ENCODE measurements at regions of chr7 and their contacts with region 1.

Region 1: DNA sequence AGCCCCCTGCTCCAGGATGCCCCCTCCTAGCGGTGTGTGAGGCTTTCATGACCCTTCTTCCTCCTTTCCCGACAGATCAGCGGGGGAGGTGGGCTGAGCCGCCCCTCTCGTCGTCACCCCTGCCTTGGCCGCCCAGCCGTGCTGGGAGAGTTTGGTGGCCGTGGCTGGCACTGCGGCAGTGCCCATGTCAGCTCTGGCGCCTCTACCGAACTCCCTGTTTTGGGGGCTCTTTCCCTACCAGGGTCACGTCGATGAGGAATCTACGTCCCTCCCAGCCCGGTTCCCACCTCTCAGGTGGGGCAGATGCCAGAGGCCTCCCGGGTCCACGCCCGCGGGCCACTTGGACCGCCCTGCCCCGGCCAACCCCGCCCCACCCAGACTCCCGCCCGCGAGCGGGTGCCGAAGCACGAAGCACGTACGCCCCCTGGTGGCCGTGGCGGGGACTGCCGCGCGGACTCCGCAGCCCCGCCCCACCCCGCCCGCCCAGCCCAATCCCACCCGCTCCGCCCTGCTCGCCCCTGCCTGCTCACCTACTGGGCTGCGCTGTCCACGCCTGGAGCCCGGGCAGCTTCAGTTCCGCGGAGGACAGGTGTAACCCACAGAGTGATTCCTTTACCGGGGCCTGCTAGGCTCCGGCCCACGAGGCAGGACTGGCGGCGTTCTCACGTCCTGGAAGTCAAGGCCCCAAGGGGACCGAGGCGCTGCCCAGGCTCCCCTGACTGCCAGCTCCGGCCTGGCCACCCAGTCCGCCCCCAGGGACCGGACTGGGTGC is 127.1 kb downstream of the UBE2H start:
- DNase-seq: peak; percentile 88
- ATAC-seq: peak; percentile 92
- H3K4me3 ChIP-seq: peak overlapping the region; percentile 50 to 83 (median 64)
- H3K4me3 Mint-ChIP-seq: peak overlapping the region; percentile 96
- H3K27ac ChIP-seq: no peak overlapping the region
- H3K27ac Mint-ChIP-seq: peak overlapping the region; percentile 55
- H3K4me1 ChIP-seq: peaks cover 16 to 26% of the 10 kb centered on the region in 2 donors
- H3K4me1 Mint-ChIP-seq: peaks cover 18% of the 10 kb centered on the region
- H3K27me3 ChIP-seq: no peaks in the 10 kb centered on the region
- H3K27me3 Mint-ChIP-seq: no peaks in the 10 kb centered on the region
- CTCF ChIP-seq: peak; percentile 95

Region 2: GRCh38 chr7:129343099-129343700 is 482.5 kb before region 1 on chr7:
- CTCF ChIA-PET with region 1: interaction called, 18 read pairs
- POLR2A ChIA-PET with region 1: no interaction called
- intact Hi-C with region 1: loop called (anchors 1 kb)
- DNase-seq: peak; percentile 58
- ATAC-seq: no peak
- H3K4me3 ChIP-seq: no peak overlapping the region
- H3K4me3 Mint-ChIP-seq: no peak overlapping the region
- H3K27ac ChIP-seq: no peak overlapping the region
- H3K27ac Mint-ChIP-seq: no peak overlapping the region
- H3K4me1 ChIP-seq: no peaks in the 10 kb centered on the region
- H3K4me1 Mint-ChIP-seq: peaks cover 4% of the 10 kb centered on the region
- H3K27me3 ChIP-seq: no peaks in the 10 kb centered on the region
- H3K27me3 Mint-ChIP-seq: no peaks in the 10 kb centered on the region
- CTCF ChIP-seq: peak; percentile 90

Region 3: GRCh38 chr7:129433847-129434674 is 391.6 kb before region 1 on chr7 and contains the start of gene STRIP2:
- CTCF ChIA-PET with region 1: interaction called, 3 read pairs
- POLR2A ChIA-PET with region 1: no interaction called
- intact Hi-C with region 1: loop called (anchors 1 kb)
- DNase-seq: peak; percentile 90
- ATAC-seq: peak; percentile 97
- H3K4me3 ChIP-seq: peak within 1 kb of the TSS; percentile 25 to 90 (median 74)
- H3K4me3 Mint-ChIP-seq: peak within 1 kb of the TSS; percentile 95
- H3K27ac ChIP-seq: peak within 1 kb of the TSS in 1 of 2 donors; percentile 56
- H3K27ac Mint-ChIP-seq: peak within 1 kb of the TSS; percentile 26
- H3K4me1 ChIP-seq: peaks cover 16 to 22% of the 10 kb centered on the region in 2 donors
- H3K4me1 Mint-ChIP-seq: peaks cover 22% of the 10 kb centered on the region
- H3K27me3 ChIP-seq: peaks cover 0 to 36% (median 24%) of the 10 kb centered on the region in 4 experiments
- H3K27me3 Mint-ChIP-seq: peaks cover 34% of the 10 kb centered on the region
- CTCF ChIP-seq: peak; percentile 23
- total RNA-seq, gene STRIP2: 0.39 and 0.79 TPM in 2 replicates

Region 4: DNA sequence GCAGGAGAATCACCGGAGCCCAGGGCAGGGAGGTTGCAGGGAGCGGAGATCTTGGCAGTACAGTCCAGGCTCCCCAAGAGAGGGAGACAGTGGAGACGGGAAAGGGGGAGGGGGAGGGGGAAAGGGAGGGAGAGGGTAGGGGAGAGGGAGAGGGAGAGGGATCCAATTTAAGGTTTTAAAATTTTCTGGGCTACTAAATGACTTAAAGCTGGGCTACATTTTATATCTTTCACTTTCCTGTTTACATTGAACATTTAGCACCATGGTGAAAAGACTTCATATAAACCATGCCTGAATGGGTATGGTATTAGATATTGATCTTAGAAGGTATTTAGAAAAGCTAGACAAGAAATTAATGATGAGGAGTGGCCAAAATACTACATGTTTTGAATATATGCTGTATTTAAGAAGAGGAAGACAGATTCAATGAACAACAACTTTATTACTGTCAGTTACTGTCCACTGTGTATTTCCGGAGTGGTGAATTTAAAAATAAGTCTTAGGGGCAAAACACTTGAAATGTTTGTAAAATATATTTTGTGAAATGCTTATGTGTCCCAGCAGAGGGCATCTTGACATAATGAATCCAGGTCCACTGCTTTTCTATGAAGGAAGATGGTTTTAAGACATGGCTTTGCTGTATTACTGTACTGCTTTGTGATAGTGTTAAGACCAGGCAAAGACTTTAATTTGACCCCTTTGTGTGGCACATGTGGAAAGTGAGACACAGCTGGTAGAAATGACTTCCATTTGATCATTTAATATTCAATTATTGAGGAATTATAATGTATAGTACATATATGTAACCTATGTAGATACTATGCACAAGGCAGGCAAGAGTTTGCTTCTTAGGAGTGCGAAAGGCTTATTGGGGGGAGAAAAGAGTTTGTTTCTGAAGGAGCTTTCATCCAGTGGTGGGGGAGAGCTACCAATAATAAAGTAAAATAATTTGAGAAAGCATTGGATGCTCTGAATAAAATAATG is 161.4 kb before region 1 on chr7:
- CTCF ChIA-PET with region 1: interaction called, 4 read pairs
- POLR2A ChIA-PET with region 1: no interaction called
- intact Hi-C with region 1: loop called (anchors 1 kb)
- DNase-seq: peak; percentile 12
- ATAC-seq: peak; percentile 21
- H3K4me3 ChIP-seq: no peak overlapping the region
- H3K4me3 Mint-ChIP-seq: no peak overlapping the region
- H3K27ac ChIP-seq: no peak overlapping the region
- H3K27ac Mint-ChIP-seq: no peak overlapping the region
- H3K4me1 ChIP-seq: no peaks in the 10 kb centered on the region
- H3K4me1 Mint-ChIP-seq: peaks cover 4% of the 10 kb centered on the region
- H3K27me3 ChIP-seq: no peaks in the 10 kb centered on the region
- H3K27me3 Mint-ChIP-seq: no peaks in the 10 kb centered on the region
- CTCF ChIP-seq: peak; percentile 37

Region 5: DNA sequence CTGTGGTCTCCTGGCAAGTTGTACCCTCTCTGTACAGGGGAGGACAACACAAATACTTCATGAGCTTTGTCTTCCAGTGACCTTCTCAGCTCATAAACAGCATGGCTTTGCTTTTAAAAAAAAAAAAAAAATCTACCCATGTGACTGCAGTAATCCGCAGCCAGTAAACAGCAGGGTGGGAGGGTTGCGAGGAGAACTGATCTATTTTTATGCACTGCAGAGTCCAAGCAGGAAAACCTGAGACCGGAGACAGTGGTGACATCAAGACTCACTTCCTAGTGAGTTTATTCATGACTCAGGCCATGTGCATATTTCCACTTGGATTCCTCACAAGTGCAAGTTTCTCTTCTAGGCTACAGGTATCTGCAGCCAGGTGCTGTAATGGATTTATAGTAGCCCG is 86.3 kb before region 1 on chr7:
- CTCF ChIA-PET with region 1: interaction called, 5 read pairs
- POLR2A ChIA-PET with region 1: no interaction called
- intact Hi-C with region 1: loop called (anchors 10 kb)
- DNase-seq: no peak
- ATAC-seq: no peak
- H3K4me3 ChIP-seq: no peak overlapping the region
- H3K4me3 Mint-ChIP-seq: no peak overlapping the region
- H3K27ac ChIP-seq: no peak overlapping the region
- H3K27ac Mint-ChIP-seq: no peak overlapping the region
- H3K4me1 ChIP-seq: no peaks in the 10 kb centered on the region
- H3K4me1 Mint-ChIP-seq: no peaks in the 10 kb centered on the region
- H3K27me3 ChIP-seq: no peaks in the 10 kb centered on the region
- H3K27me3 Mint-ChIP-seq: no peaks in the 10 kb centered on the region
- CTCF ChIP-seq: no peak

Region 6: GRCh38 chr7:129855234-129855673 is 29.6 kb after region 1 on chr7:
- CTCF ChIA-PET with region 1: interaction called, 11 read pairs
- POLR2A ChIA-PET with region 1: no interaction called
- intact Hi-C with region 1: no loop called
- DNase-seq: no peak
- ATAC-seq: no peak
- H3K4me3 ChIP-seq: no peak overlapping the region
- H3K4me3 Mint-ChIP-seq: no peak overlapping the region
- H3K27ac ChIP-seq: no peak overlapping the region
- H3K27ac Mint-ChIP-seq: no peak overlapping the region
- H3K4me1 ChIP-seq: peaks cover 10 to 19% of the 10 kb centered on the region in 2 donors
- H3K4me1 Mint-ChIP-seq: peaks cover 31% of the 10 kb centered on the region
- H3K27me3 ChIP-seq: no peaks in the 10 kb centered on the region
- H3K27me3 Mint-ChIP-seq: no peaks in the 10 kb centered on the region
- CTCF ChIP-seq: no peak

Region 7: DNA sequence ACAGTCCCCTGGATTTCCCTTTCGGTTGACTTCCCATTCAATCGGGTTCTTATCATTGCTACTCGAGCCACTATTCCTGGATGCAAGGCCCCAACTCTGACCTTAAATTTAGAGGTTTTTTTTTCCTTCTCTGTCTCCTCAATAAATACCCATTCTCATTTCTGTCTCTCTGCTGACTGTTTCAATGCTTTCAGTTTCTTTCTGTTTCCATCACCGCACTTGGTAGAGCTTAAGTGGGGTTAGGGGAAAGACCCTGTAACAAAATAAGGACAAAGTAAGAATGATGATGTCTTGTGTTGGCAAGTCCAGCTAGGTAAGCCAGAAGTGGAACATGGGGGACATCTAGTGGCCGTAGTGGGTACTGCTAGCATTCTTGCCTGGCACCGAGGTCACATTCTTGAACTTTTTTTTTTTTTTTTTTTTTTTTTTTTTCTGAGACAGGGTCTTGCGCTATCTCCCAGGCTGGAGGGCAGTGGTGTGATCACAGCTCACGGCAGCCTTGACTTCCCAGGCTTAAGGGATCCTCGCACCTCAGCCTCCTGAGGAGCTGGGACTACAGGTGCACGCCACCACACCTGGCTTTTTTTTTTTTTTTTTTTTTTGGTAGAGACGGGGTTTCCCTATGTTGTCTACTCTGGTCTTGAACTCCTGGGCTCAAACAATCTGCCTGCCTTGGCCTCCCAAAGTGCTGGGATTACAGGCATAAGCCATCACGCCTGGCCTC is 185.2 kb after region 1 on chr7:
- CTCF ChIA-PET with region 1: interaction called, 116 read pairs
- POLR2A ChIA-PET with region 1: interaction called, 3 read pairs
- intact Hi-C with region 1: loop called (anchors 1 kb)
- DNase-seq: peak; percentile 91
- ATAC-seq: peak; percentile 97
- H3K4me3 ChIP-seq: no peak overlapping the region
- H3K4me3 Mint-ChIP-seq: no peak overlapping the region
- H3K27ac ChIP-seq: no peak overlapping the region
- H3K27ac Mint-ChIP-seq: peak overlapping the region; percentile 34
- H3K4me1 ChIP-seq: peaks cover 0 to 6% of the 10 kb centered on the region in 2 donors
- H3K4me1 Mint-ChIP-seq: peaks cover 6% of the 10 kb centered on the region
- H3K27me3 ChIP-seq: no peaks in the 10 kb centered on the region
- H3K27me3 Mint-ChIP-seq: no peaks in the 10 kb centered on the region
- CTCF ChIP-seq: peak; percentile 86

Region 8: DNA sequence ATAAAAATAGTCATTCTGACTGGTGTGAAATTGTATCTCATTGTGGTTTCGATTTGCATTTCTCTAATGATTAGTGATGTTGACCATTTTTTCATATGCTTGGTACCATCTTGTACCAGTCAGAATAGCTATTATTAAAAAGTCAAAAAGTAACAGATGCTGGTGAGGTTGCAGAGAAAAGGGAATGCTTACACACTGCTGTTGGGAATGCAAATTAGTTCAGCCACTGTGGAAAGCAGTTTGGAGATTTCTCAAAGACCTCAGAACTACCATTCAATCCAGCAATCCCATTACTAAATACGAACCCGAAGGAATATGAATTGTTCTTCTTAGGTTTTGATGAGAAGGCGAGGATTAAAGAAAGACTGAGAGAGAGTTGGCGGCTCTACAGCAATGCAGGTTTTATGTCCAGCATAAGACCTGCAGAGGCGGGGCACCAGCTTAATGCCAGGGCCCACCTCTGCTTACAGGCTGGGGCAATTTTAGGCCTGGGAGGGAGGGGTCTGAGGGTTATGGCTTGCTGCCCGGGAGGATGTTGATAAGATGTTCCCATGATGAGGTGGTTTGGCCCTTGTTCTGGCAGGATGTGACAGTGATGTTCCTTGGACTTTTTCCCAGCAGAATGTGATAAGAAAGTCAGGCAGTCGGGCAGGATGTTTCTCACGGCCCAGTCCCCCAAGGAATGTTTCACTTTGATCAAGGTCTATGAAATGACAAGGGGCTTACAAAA is 740.7 kb after region 1 on chr7:
- CTCF ChIA-PET with region 1: no interaction called
- POLR2A ChIA-PET with region 1: no interaction called
- intact Hi-C with region 1: no loop called
- DNase-seq: no peak
- ATAC-seq: no peak
- H3K4me3 ChIP-seq: no peak overlapping the region
- H3K4me3 Mint-ChIP-seq: no peak overlapping the region
- H3K27ac ChIP-seq: no peak overlapping the region
- H3K27ac Mint-ChIP-seq: no peak overlapping the region
- H3K4me1 ChIP-seq: no peaks in the 10 kb centered on the region
- H3K4me1 Mint-ChIP-seq: peaks cover 4% of the 10 kb centered on the region
- H3K27me3 ChIP-seq: no peaks in the 10 kb centered on the region
- H3K27me3 Mint-ChIP-seq: no peaks in the 10 kb centered on the region
- CTCF ChIP-seq: no peak

Measured in B cell (primary cell).